ENCODE measurements at regions of chr9 and their contacts with region 1.

Region 1: DNA sequence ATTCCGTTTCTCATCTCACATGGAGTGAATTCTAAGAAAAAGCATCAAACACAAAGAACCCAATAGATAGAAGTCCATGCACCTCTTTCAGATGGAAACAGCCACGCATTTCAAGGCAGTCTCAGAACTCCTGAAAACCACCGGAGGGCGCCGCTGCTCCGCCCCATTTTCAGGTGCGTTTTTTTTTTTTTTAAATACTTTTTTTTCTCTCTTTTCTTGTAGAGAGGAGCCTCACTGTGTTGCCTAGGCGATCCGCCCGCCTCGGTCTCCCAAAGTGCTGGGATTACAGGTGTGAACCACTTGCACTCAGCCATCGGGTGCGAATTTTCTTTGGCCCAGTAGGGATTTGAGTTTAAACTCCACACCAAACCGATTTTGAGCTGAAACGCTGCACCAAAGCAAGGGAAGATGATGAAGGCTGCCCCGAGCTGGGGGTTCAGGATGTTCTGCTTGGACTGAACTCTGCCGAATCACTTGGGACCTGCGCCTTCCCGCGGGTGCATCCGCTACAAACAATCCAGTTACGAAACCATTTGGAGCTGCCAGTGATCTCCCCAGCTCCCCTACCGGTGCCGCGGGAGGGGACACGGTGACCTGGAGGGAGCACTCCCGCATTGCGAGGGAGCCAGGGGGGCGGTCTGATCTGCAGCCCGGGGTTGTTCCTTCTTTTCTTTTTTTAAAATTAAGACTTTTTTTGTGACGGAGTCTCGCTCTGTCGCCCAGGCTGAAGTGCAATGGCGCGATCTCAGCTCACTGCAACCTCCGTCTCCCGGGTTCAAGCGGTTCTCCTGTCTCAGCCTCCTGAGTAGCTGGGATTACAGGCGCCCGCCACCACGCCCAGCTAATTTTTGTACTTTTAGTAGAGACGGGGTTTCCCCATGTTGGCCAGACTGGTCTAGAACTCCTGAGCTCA is 1.4 kb downstream of the PTGR1 start:
- DNase-seq: peak; percentile 85
- ATAC-seq: peak; percentile 74

Region 2: DNA sequence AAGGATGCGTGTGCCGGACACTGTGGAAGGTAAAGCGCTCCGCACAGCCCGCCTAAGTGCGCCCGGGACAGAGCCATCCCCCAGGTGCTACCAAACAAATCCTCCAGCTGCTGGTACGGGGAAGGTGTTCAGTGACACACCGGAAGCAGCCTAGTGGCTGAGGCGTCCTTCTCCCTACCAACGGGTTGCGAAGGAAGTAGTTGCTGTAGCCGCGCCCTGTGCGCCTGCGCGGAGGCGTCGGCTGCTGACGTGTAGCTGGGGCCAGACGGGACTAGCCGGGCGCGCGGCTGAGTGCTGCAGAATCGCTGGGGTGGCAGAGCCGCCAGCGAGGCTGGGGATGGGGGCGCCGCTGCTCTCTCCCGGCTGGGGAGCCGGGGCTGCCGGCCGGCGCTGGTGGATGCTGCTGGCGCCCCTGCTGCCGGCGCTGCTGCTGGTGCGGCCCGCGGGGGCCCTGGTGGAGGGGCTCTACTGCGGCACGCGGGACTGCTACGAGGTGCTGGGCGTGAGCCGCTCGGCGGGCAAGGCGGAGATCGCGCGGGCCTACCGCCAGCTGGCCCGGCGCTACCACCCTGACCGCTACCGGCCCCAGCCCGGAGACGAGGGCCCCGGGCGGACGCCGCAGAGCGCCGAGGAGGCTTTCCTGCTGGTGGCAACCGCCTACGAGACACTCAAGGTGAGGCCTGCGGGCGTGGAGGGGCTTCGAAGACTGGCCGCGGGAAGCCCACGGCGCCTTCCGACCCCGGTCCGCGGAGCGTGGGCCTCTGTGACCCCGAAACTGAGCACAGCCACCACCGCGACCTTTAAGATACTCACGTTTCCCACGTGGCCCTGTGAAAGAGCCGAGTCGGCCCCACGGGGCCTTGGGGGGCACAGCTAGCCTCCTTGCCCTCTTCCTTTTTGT is 33.2 kb after region 1 on chr9 and contains the start of gene DNAJC25:
- intact Hi-C with region 1: loop called (anchors 2 kb)
- DNase-seq: peak; percentile 98
- ATAC-seq: peak; percentile 100
- total RNA-seq, gene DNAJC25: 5.4 TPM

Region 3: GRCh38 chr9:111691672-111692329 is 93.7 kb after region 1 on chr9:
- intact Hi-C with region 1: loop called (anchors 10 kb)
- DNase-seq: no peak
- ATAC-seq: no peak